HepG2 (cell line): ENCODE measurements at regions of chr7 and their contacts with region 1.

Region 1: DNA sequence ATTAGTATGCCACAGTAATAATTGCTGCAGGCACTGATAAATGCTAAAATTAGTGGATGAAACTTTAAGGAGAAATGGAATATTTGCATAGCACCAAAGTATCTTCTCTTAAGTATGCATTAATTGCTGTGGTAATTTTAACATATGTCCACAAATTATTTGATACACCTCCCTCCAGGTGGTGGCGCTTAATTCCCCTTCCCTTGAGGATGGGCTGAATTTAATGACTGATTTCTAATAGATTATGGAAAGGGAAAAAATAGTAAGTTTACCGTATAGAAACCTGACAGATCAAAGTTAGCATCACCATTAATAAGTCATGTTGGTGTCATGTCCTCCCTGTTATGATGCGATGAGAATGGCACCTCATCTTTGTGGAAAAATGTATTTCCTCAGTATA is 519.2 kb downstream of the TFEC start:
- DNase-seq: no peak
- ATAC-seq: no peak
- H3K4me3 ChIP-seq: no peak overlapping the region
- H3K27ac ChIP-seq: no peak overlapping the region
- H3K4me1 ChIP-seq: no peaks in the 10 kb centered on the region
- H3K27me3 ChIP-seq: no peaks in the 10 kb centered on the region
- CTCF ChIP-seq: no peak
- EP300 ChIP-seq: no peak
- POLR2A ChIP-seq: no peak
- RAD21 ChIP-seq: no peak

Region 2: DNA sequence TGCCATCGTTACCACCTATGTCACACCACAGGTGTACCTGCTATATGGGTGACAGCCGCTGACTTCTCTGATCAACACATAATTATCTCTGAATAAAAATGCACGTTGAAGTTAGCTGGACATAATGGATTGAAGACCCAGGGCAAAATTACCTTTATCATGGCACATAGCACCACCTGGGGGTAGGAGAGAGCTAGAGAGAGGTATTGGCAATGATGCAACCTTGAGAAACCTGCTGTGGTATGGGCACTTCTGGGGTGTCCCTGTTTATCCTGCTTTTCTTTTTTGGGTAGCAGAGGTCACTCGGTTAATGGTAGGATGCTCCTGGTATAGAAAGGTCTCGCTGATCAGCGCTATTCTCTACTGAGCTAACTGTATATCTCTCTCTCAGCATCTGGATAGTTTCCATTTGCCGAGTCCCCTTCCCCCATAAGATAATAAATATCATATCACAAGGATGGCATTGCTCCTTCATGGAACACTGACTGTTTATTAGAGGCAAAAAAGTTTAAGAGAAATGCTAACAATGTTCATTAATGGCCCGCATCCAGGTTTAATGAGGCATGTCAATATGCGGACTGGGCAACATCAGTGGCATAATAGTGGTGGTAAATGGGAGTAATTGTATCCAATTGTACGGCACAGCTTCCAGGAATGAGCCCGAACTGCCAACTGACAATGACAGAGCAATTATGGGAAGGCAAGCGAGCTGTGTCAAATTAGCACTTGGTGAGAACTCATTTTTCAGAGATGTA is 196.1 kb after region 1 on chr7:
- CTCF ChIA-PET with region 1: no interaction called
- POLR2A ChIA-PET with region 1: no interaction called
- in situ Hi-C with region 1: no loop called
- intact Hi-C with region 1: loop called (anchors 1 kb)
- DNase-seq: peak; percentile 30
- ATAC-seq: peak; percentile 94
- H3K4me3 ChIP-seq: no peak overlapping the region
- H3K27ac ChIP-seq: no peak overlapping the region
- H3K4me1 ChIP-seq: no peaks in the 10 kb centered on the region
- H3K27me3 ChIP-seq: no peaks in the 10 kb centered on the region
- CTCF ChIP-seq: peak; percentile 67
- EP300 ChIP-seq: no peak
- POLR2A ChIP-seq: no peak
- RAD21 ChIP-seq: no peak